Activated CD8-positive, alpha-beta memory T cell treated with anti-CD3 and anti-CD28 coated beads, Interleukin-2, amount 10 ng/mL, durations not matched to agents 7 days and 5 days (primary cell): ENCODE measurements at regions of chr1 and their contacts with region 1.

Region 1: DNA sequence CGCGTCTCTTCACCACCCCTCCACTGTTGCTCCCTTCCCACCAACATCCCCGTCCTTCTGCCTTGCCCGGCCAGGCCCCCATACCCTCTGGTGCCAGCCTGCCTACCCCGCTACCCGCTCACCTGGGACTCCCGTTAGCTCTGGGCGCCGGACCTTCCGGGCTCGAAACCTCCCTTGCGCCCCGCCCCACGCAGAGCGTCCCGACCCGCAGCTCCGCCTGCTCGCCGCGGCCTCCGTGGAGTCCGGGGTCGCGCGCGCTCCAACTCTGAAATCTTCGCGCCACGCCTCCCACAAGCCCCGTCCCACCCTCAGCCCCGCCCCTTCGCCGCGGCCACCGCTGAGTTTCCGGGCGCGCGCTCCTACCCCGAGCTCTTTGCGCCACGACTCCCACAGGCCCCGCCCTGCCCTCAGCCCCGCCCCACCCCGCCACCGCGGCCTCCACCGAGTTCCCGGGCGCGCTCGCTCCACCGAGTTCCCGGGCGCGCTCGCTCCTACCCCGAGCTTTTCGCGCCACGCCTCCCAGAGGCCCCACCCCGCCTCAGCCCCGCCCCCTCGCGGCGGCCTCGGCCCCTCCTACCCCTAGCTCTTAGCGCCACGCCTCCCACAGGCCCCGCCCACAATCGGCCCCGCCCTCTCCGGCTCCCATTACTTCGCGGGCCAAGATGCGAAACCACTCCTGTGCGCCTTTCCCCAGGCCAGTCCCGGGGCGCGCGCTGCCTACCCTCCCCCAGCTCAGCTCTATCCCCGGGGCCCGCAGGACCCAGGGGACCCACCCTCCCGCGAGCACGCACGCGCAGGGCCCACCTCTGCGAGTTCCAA is at the start of gene IFT25:
- DNase-seq: peak; percentile 98
- ATAC-seq: peak; percentile 75
- H3K4me3 Mint-ChIP-seq: peak within 1 kb of the TSS; percentile 99
- H3K27ac Mint-ChIP-seq: peak within 1 kb of the TSS; percentile 96
- H3K4me1 Mint-ChIP-seq: peaks cover 53% of the 10 kb centered on the region
- H3K27me3 Mint-ChIP-seq: no peaks in the 10 kb centered on the region
- total RNA-seq, gene IFT25: 69.3 to 82.6 TPM

Region 2: DNA sequence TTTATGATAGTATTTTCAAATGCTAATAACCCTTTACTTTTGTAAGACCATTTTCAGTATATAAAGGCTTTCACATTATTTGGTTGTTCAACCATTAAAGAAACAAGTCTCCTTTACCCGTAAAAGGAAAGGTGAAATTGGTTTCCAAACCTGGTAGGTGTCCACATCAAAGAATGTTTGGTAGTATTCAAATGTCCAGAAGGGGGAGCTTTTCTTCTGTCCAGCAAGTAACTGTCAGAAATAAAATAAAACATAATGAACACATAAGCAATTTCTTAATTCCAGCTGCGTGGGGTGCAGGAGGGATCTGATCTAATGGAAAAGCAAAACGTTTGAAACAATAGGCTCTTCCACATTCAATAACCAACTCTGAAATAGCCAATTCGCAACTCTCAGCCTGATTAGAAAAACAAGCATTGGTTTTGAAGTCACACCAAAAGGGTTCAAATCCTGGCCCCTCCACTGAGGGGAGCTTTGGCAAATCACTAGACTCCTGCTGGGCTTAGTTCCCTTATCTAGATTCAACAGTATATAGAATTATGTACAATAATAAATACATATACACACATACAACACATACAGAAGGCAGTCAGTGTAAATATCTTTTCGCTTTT is 67.0 kb before region 1 on chr1:
- CTCF ChIA-PET with region 1: interaction called, 49 read pairs
- DNase-seq: no peak
- ATAC-seq: no peak
- H3K4me3 Mint-ChIP-seq: no peak overlapping the region
- H3K27ac Mint-ChIP-seq: no peak overlapping the region
- H3K4me1 Mint-ChIP-seq: no peaks in the 10 kb centered on the region
- H3K27me3 Mint-ChIP-seq: no peaks in the 10 kb centered on the region

Region 3: GRCh38 chr1:53919675-53920066 is 26.0 kb before region 1 on chr1:
- CTCF ChIA-PET with region 1: interaction called, 19 read pairs
- DNase-seq: peak; percentile 63
- ATAC-seq: peak; percentile 83
- H3K4me3 Mint-ChIP-seq: no peak overlapping the region
- H3K27ac Mint-ChIP-seq: peak overlapping the region; percentile 90
- H3K4me1 Mint-ChIP-seq: peaks cover 43% of the 10 kb centered on the region
- H3K27me3 Mint-ChIP-seq: no peaks in the 10 kb centered on the region

Region 4: GRCh38 chr1:54052934-54053744 is 107.5 kb after region 1 on chr1 and contains the starts of genes TCEANC2 and TMEM59:
- CTCF ChIA-PET with region 1: interaction called, 11 read pairs
- DNase-seq: peak; percentile 99
- ATAC-seq: peak; percentile 94
- H3K4me3 Mint-ChIP-seq: no peak within 1 kb of the TSS
- H3K27ac Mint-ChIP-seq: no peak within 1 kb of the TSS
- H3K4me1 Mint-ChIP-seq: peaks cover 32% of the 10 kb centered on the region
- H3K27me3 Mint-ChIP-seq: no peaks in the 10 kb centered on the region
- total RNA-seq, gene TCEANC2: 11.8 to 13.1 TPM
- total RNA-seq, gene TMEM59: 165 to 171 TPM